Activated CD4-positive, alpha-beta T cell treated with anti-CD3 and anti-CD28 coated beads for 36 hours (primary cell): ENCODE measurements at regions of chr14 and their contacts with region 1.

Region 1: GRCh38 chr14:23301288-23301968 is 1.2 kb downstream of the PPP1R3E start:
- DNase-seq: peak; percentile 99
- ATAC-seq: peak; percentile 84
- H3K4me3 Mint-ChIP-seq: peak overlapping the region; percentile 100
- H3K27ac Mint-ChIP-seq: peak overlapping the region; percentile 94
- H3K4me1 Mint-ChIP-seq: peaks cover 18% of the 10 kb centered on the region
- H3K27me3 Mint-ChIP-seq: peaks cover 10% of the 10 kb centered on the region

Region 2: GRCh38 chr14:22589096-22589839 is 712.2 kb before region 1 on chr14 and contains the start of gene DAD1:
- CTCF ChIA-PET with region 1: no interaction called
- POLR2A ChIA-PET with region 1: no interaction called
- intact Hi-C with region 1: loop called in 1 of 2 experiments (anchors 10 kb)
- DNase-seq: peak; percentile 100
- ATAC-seq: peak; percentile 84
- H3K4me3 Mint-ChIP-seq: peak within 1 kb of the TSS; percentile 93
- H3K27ac Mint-ChIP-seq: peak within 1 kb of the TSS; percentile 97
- H3K4me1 Mint-ChIP-seq: peaks cover 72% of the 10 kb centered on the region
- H3K27me3 Mint-ChIP-seq: peaks cover 1% of the 10 kb centered on the region
- total RNA-seq, gene DAD1: 265 to 302 TPM

Region 3: DNA sequence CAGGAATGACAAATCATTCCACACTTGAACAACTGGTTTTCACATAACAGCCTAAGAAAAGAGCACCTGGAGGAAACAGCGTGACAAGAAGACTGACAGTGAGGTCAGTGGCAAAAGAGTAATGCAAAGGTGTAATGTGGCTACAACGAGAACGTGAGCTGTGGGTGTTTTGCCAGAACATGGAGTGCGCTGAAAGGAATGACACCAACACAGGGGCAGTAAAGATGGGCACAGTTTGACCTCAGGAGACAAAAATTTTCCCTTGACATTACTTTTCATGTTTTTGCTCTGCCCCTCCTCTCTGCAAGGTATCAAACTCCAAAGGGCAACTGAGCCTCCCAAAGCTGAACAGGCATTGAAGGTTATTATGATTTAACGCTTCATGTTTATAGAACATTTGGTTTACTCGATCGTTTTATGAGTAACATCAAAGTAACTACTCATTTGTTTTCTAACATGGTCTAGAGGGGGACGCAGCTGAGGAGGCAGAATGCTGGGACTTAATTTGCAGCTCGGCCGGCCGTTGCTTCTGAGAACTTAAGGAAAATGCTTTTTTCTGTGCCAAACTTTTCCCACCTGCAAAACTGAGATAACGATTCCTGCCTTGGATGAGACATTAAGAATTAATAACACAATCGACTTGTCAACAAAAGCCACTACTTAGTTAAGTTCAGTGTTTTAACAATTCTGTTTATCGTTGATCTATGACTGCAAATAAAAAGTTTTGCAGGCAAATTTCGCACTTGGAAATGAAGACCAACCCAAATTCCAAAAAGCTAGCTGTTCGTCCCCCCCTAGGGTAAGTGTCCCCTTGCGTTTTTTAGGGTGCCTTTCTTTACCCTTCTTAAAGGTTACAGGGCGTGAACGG is 345.5 kb before region 1 on chr14:
- CTCF ChIA-PET with region 1: no interaction called
- POLR2A ChIA-PET with region 1: no interaction called
- intact Hi-C with region 1: loop called in 1 of 2 experiments (anchors 5 kb)
- DNase-seq: no peak
- ATAC-seq: no peak
- H3K4me3 Mint-ChIP-seq: peak overlapping the region; percentile 88
- H3K27ac Mint-ChIP-seq: peak overlapping the region; percentile 90
- H3K4me1 Mint-ChIP-seq: peaks cover 18% of the 10 kb centered on the region
- H3K27me3 Mint-ChIP-seq: no peaks in the 10 kb centered on the region

Region 4: GRCh38 chr14:23120541-23121251 is 180.7 kb before region 1 on chr14:
- CTCF ChIA-PET with region 1: interaction called, 35 read pairs
- POLR2A ChIA-PET with region 1: no interaction called
- intact Hi-C with region 1: loop called in 1 of 2 experiments (anchors 2 kb)
- DNase-seq: peak; percentile 91
- ATAC-seq: peak; percentile 93
- H3K4me3 Mint-ChIP-seq: no peak overlapping the region
- H3K27ac Mint-ChIP-seq: peak overlapping the region; percentile 68
- H3K4me1 Mint-ChIP-seq: peaks cover 47% of the 10 kb centered on the region
- H3K27me3 Mint-ChIP-seq: no peaks in the 10 kb centered on the region

Region 5: DNA sequence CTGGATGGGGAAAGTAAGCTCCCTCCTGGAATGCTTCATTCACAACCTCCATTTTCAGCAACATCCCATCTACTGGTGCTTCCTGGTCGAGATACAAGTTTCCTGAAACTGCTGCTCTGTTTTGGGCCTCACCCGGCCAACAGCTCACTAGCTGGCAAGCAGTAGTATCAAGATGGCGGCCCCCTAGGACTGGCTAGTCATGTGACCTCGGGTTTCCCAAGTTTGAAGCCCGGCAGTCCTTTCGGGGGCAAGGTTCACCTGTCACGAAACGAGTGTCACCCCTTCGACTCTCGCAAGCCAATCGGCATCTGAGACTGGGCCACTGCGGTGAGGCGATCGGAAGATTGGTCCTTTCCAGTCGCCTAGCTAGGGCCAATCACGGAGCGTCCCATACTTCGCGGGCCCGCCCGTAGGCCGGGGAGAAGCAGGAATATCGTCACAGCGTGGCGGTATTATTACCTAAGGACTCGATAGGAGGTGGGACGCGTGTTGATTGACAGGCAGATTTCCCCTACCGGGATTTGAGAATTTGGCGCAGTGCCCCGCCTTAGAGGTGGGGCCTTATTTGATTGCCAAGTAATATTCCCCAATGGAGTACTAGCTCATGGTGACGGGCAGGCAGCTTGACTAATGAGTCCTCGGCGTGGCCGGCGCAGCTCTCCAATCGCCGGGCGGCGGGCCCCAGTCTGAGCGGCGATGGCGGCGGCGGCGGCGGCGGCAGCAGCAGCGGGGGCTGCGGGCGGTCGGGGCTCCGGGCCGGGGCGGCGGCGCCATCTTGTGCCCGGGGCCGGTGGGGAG is 19.5 kb after region 1 on chr14 and contains the start of gene PABPN1:
- CTCF ChIA-PET with region 1: interaction called, 173 read pairs
- POLR2A ChIA-PET with region 1: interaction called, 93 read pairs
- intact Hi-C with region 1: loop called (anchors 1 kb)
- DNase-seq: peak; percentile 98
- ATAC-seq: peak; percentile 91
- H3K4me3 Mint-ChIP-seq: peak within 1 kb of the TSS; percentile 93
- H3K27ac Mint-ChIP-seq: peak within 1 kb of the TSS; percentile 95
- H3K4me1 Mint-ChIP-seq: peaks cover 25% of the 10 kb centered on the region
- H3K27me3 Mint-ChIP-seq: no peaks in the 10 kb centered on the region
- total RNA-seq, gene PABPN1: 237 to 338 TPM

Region 6: GRCh38 chr14:24114536-24115450 is 813.4 kb after region 1 on chr14 and contains the starts of genes DCAF11 and NRL:
- CTCF ChIA-PET with region 1: no interaction called
- POLR2A ChIA-PET with region 1: no interaction called
- intact Hi-C with region 1: loop called in 1 of 2 experiments (anchors 1 kb)
- DNase-seq: peak; percentile 99
- ATAC-seq: peak; percentile 89
- H3K4me3 Mint-ChIP-seq: peak within 1 kb of the TSS; percentile 85
- H3K27ac Mint-ChIP-seq: peak within 1 kb of the TSS; percentile 97
- H3K4me1 Mint-ChIP-seq: peaks cover 28% of the 10 kb centered on the region
- H3K27me3 Mint-ChIP-seq: no peaks in the 10 kb centered on the region
- total RNA-seq, gene DCAF11: 74.0 to 86.2 TPM
- total RNA-seq, gene NRL: 1.5 to 1.6 TPM